ENCODE measurements at regions of chr13 and their contacts with region 1.

Region 1: DNA sequence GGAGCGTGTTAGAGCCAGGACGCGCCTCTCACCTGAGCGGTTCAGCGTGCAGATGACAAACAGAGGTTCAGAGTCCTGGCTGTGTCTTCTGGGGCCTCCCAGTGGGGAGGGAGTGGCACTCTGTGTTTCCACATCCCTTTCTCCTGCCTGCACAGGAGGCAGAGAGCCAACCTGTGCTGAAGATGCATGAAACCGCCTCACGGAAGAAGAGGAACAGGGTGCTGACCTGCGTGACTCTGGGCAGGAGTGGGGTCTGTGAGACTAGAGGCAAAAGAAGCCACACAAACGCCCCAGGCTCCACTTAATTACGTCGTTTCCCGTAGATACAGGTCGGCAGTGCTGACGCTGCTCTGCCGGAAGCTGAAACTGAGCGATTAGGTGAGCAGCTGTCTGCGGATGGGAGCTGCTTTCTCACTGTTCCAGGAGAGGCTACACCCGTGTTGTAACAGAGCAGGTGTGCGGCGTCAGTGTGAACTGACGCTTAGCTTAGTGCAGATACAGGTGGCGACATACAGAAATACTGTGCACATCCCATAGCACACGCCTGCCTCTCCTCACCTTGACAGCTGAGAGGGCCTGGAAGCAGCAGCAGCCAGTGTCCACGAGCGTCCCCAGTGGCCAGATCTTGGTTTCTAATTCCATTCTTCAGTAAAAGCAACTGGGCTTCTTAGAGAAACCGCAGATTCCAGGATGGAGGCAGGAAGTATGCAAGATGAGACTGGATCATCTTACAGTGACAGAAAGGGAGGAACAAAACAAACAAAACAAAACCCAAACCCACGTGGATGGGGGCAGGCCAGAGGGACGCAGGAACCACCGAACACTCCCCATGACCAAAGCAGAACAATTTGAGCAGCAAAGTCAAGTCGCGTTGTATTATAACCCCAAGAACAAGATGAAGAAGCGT is 37.7 kb upstream of the MCF2L start:
- DNase-seq: peak; percentile 56 to 57
- H3K4me3 ChIP-seq: no peak overlapping the region
- H3K27ac ChIP-seq: no peak overlapping the region
- H3K4me1 ChIP-seq: 0 out of 2 replicates have a peak, but pooled peaks cover 3% of the 10 kb centered on the region
- H3K27me3 ChIP-seq: peaks cover 52% of the 10 kb centered on the region
- CTCF ChIP-seq: peak; percentile 76

Region 2: GRCh38 chr13:112634102-112634501 is 297.2 kb before region 1 on chr13:
- CTCF ChIA-PET with region 1: interaction called, 26 read pairs
- POLR2A ChIA-PET with region 1: no interaction called
- intact Hi-C with region 1: no loop called
- DNase-seq: no peak
- H3K4me3 ChIP-seq: no peak overlapping the region
- H3K27ac ChIP-seq: no peak overlapping the region
- H3K4me1 ChIP-seq: no peaks in the 10 kb centered on the region
- H3K27me3 ChIP-seq: peaks cover 52% of the 10 kb centered on the region
- CTCF ChIP-seq: no peak

Region 3: GRCh38 chr13:112893570-112894422 is 37.5 kb before region 1 on chr13:
- CTCF ChIA-PET with region 1: no interaction called
- POLR2A ChIA-PET with region 1: no interaction called
- intact Hi-C with region 1: loop called (anchors 1 kb)
- DNase-seq: peak in 1 of 2 experiments; percentile 44
- H3K4me3 ChIP-seq: no peak overlapping the region; the same call in 1 of the 2 replicates
- H3K27ac ChIP-seq: no peak overlapping the region
- H3K4me1 ChIP-seq: no peaks in the 10 kb centered on the region; the same call in 1 of the 2 replicates
- H3K27me3 ChIP-seq: peaks cover 91% of the 10 kb centered on the region
- CTCF ChIP-seq: no peak

Measured in PC-9 (cell line).